ENCODE measurements at regions of chr5 and their contacts with region 1.

Region 1: DNA sequence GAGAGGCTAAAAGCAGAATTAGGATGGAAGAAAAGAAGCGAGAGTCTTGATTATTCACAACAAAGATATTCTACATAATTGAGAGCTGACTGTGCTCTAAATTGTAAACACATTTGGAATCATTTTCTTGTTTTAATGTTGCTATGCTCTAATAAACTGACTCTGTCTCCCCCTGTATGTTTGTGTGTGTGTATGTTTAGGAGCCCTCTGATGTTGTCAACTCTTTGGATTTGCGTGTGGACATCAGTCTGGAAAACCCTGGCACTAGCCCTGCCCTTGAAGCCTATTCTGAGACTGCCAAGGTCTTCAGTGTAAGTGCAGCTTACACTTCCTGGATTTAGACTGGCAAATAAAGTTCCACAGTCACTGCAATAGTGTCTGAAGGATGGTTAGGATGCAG is 37.8 kb downstream of the MOCS2 start:
- DNase-seq: no peak
- ATAC-seq: no peak
- H3K4me3 ChIP-seq: no peak overlapping the region
- H3K27ac ChIP-seq: no peak overlapping the region
- H3K4me1 ChIP-seq: no peaks in the 10 kb centered on the region
- H3K27me3 ChIP-seq: no peaks in the 10 kb centered on the region
- CTCF ChIP-seq: no peak

Region 2: GRCh38 chr5:53537711-53538110 is 466.0 kb after region 1 on chr5:
- intact Hi-C with region 1: no loop called
- DNase-seq: no peak
- ATAC-seq: peak in 1 of 4 donors; percentile 25
- H3K4me3 ChIP-seq: no peak overlapping the region
- H3K27ac ChIP-seq: no peak overlapping the region
- H3K4me1 ChIP-seq: no peaks in the 10 kb centered on the region
- H3K27me3 ChIP-seq: no peaks in the 10 kb centered on the region
- CTCF ChIP-seq: no peak

Region 3: DNA sequence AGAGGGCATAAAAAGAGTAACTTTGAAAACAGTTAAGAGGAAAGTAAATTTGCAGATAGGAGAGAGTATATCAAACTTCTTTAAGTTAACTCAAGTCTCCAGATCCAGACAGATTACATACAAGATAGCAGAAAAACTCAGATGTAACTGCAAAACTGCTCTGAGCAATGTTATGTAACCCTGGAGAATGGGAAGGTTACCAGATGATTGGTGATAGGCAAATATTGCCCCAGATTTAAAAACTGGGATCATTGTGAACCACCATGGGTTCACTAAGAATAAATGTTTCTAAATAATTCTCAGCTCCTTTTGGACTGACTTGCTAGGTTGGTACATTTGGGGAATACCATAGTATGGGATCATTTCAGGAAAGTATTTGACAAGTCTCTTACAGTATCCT is 1062.2 kb after region 1 on chr5:
- intact Hi-C with region 1: loop called in 1 of 2 experiments (anchors 2 kb)
- DNase-seq: no peak
- ATAC-seq: no peak
- H3K4me3 ChIP-seq: no peak overlapping the region
- H3K27ac ChIP-seq: no peak overlapping the region
- H3K4me1 ChIP-seq: no peaks in the 10 kb centered on the region
- H3K27me3 ChIP-seq: no peaks in the 10 kb centered on the region
- CTCF ChIP-seq: no peak

Measured in psoas muscle (tissue), 8 donors.